ENCODE measurements at regions of chr4 and their contacts with region 1.

Region 1: DNA sequence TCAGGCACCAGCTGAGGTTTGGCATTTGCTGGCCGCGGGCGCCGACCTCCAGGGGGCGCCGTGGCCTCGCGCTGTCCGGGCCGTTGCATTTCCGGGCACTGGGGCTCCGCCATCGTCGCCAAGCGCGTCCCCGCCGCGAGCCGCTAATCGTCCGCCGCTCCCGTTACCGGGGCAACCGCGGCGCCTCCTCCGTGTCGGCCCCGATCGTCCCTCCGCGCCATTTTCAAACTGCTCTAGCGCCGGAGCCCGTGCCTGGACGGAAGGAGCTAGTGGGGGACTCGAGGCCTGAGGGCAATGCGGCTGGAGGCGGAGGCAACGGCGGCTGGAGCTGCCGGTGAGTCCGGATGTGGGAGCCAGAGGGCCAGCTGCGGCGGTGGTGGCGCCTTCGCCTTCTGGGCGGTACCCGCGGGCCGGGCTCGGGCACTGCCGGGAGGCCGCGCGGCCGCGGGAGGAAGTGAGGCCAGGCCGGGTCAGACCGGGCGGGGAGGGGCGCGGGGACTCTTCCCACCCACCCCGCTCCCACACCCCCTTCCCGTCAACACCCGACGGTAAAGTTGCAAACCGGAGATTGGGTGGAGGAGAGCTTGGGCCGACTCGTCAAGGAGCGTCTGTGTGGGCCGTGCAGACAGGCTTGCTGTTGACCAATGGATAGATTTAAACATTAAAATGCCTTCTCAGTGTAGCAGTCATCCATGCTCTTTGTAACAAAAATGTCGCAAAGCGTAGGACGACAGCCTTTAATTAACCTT is at the start of gene CEP135:
- DNase-seq: peak; percentile 95 to 96 (median 96)
- ATAC-seq: peak; percentile 97
- H3K4me3 ChIP-seq: peak within 1 kb of the TSS; percentile 52 to 77
- H3K27ac ChIP-seq: peak within 1 kb of the TSS; percentile 68 to 96 (median 84)
- H3K4me1 ChIP-seq: peaks cover 17% of the 10 kb centered on the region
- H3K27me3 ChIP-seq: peaks cover 0 to 3% of the 10 kb centered on the region in 2 donors
- CTCF ChIP-seq: peak; percentile 93 to 99 (median 97)
- POLR2A ChIP-seq: peak in 2 of 3 donors; percentile 61 to 65
- total RNA-seq, gene CEP135: 7.5 to 8.9 TPM

Region 2: GRCh38 chr4:56301181-56302076 is 352.5 kb after region 1 on chr4:
- intact Hi-C with region 1: loop called (anchors 10 kb)
- DNase-seq: peak; percentile 69 to 81 (median 76)
- ATAC-seq: peak; percentile 97
- H3K4me3 ChIP-seq: no peak overlapping the region
- H3K27ac ChIP-seq: no peak overlapping the region
- H3K4me1 ChIP-seq: peaks cover 12% of the 10 kb centered on the region
- H3K27me3 ChIP-seq: no peaks in the 10 kb centered on the region
- CTCF ChIP-seq: peak; percentile 53 to 95 (median 83)
- POLR2A ChIP-seq: no peak

Region 3: DNA sequence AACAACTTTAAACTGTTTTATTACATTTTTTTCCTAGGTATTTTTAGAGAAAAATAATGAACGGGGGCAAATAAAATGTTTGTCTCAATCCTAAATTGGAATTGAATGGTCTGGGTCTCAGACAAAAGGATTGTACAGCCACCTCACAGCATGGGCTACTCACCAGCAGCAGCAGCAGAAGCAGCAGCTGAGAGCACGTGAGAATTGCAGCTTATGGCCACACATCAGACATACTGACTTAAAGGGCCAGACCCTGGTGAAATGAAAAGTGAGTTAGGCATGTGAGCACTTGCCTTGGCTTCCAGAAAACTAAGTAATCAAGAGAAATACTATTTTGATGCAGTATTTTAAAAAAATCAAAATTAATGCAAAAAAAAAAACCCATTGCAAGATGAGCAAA is 381.8 kb after region 1 on chr4:
- intact Hi-C with region 1: no loop called
- DNase-seq: no peak
- ATAC-seq: no peak
- H3K4me3 ChIP-seq: no peak overlapping the region
- H3K27ac ChIP-seq: no peak overlapping the region
- H3K4me1 ChIP-seq: no peaks in the 10 kb centered on the region
- H3K27me3 ChIP-seq: no peaks in the 10 kb centered on the region
- CTCF ChIP-seq: no peak
- POLR2A ChIP-seq: no peak